ENCODE measurements at regions of chr14 and their contacts with region 1.

Region 1: GRCh38 chr14:65222440-65222858 is 120.1 kb upstream of the MAX start:
- DNase-seq: peak; percentile 41 to 46
- H3K4me3 ChIP-seq: no peak overlapping the region
- H3K27ac ChIP-seq: no peak overlapping the region
- H3K4me1 ChIP-seq: no peaks in the 10 kb centered on the region
- H3K27me3 ChIP-seq: no peaks in the 10 kb centered on the region
- CTCF ChIP-seq: peak; percentile 35 to 80 (median 62)
- POLR2A ChIP-seq: no peak

Region 2: DNA sequence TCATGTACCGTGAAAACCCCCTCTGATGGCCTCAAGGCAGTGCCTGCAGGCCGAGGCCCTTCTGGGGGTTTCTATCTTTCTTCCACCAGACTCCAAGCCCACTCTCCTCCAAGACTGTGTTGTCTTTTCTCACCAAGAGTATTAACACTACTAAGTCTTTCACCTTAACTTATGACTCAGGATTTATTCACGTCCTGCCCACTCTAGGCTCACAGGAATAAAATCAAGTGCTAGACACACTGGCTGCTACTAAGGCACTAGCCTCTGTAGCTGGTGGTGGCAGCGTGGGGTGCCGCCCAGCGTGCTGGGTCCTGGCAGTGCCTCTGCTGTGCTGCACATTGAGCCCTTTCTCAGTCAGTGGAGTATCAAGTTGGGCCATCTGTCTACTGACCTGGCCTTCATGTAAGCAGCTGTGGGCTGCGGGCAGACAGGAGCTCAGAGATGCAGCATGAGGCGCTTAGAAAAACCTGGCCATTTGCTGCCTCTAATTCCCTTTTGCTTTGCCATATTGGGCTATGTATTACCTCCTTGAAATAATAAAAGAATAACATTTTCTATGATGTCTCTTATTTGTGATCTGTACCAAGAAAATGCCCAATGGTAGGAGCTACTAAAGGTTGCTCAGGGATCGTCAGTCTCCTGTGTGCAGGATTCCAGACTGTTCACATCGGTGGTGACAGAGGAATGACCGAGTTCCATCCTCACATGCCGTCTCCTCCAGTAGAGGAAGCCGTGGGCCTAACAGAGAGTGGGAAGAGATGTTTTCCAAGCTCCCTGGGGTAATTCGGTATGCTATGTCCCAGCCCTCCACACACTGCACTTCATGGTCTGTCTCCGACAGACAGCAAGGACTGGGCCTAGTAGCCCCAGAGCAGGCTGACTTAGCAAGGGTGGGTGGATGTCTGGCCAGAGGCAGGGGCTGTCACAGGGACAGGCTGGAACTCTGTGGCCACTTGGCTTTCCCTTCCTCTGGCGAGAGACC is 160.1 kb before region 1 on chr14:
- intact Hi-C with region 1: no loop called
- DNase-seq: no peak
- H3K4me3 ChIP-seq: no peak overlapping the region
- H3K27ac ChIP-seq: no peak overlapping the region
- H3K4me1 ChIP-seq: no peaks in the 10 kb centered on the region
- H3K27me3 ChIP-seq: no peaks in the 10 kb centered on the region
- CTCF ChIP-seq: no peak
- POLR2A ChIP-seq: no peak

Region 3: GRCh38 chr14:65080960-65081747 is 141.3 kb before region 1 on chr14:
- intact Hi-C with region 1: no loop called
- DNase-seq: no peak
- H3K4me3 ChIP-seq: no peak overlapping the region
- H3K27ac ChIP-seq: peak overlapping the region in 1 of 3 donors; percentile 7
- H3K4me1 ChIP-seq: peaks cover 10 to 12% of the 10 kb centered on the region in 2 donors
- H3K27me3 ChIP-seq: no peaks in the 10 kb centered on the region
- CTCF ChIP-seq: no peak
- POLR2A ChIP-seq: no peak

Region 4: GRCh38 chr14:65412032-65412846 is 189.8 kb after region 1 on chr14 and contains the start of gene FUT8:
- intact Hi-C with region 1: loop called (anchors 5 kb)
- DNase-seq: peak; percentile 98
- H3K4me3 ChIP-seq: peak within 1 kb of the TSS; percentile 89 to 95 (median 89)
- H3K27ac ChIP-seq: peak within 1 kb of the TSS; percentile 73 to 97 (median 92)
- H3K4me1 ChIP-seq: peaks cover 4 to 13% of the 10 kb centered on the region in 2 donors
- H3K27me3 ChIP-seq: no peaks in the 10 kb centered on the region
- CTCF ChIP-seq: peak; percentile 18 to 87 (median 62)
- POLR2A ChIP-seq: peak in 1 of 2 donors; percentile 92
- total RNA-seq, gene FUT8: 29.2 to 55.5 (median 41.1) TPM